Transverse colon (tissue), 4 donors: ENCODE measurements at regions of chr16 and their contacts with region 1.

Region 1: GRCh38 chr16:52128361-52128760 is 418.6 kb downstream of the TOX3 start:
- DNase-seq: no peak
- H3K4me3 ChIP-seq: no peak overlapping the region
- H3K27ac ChIP-seq: no peak overlapping the region
- H3K4me1 ChIP-seq: no peaks in the 10 kb centered on the region
- H3K27me3 ChIP-seq: no peaks in the 10 kb centered on the region
- CTCF ChIP-seq: no peak
- EP300 ChIP-seq: no peak
- POLR2A ChIP-seq: no peak

Region 2: GRCh38 chr16:51807551-51807950 is 320.8 kb before region 1 on chr16:
- in situ Hi-C with region 1: no loop called
- intact Hi-C with region 1: no loop called
- DNase-seq: no peak
- H3K4me3 ChIP-seq: no peak overlapping the region
- H3K27ac ChIP-seq: no peak overlapping the region
- H3K4me1 ChIP-seq: no peaks in the 10 kb centered on the region
- H3K27me3 ChIP-seq: no peaks in the 10 kb centered on the region
- CTCF ChIP-seq: no peak
- EP300 ChIP-seq: no peak
- POLR2A ChIP-seq: no peak

Region 3: GRCh38 chr16:52035436-52035835 is 92.9 kb before region 1 on chr16:
- in situ Hi-C with region 1: loop called in 1 of 4 experiments (anchors 25 kb)
- intact Hi-C with region 1: no loop called
- DNase-seq: no peak
- H3K4me3 ChIP-seq: no peak overlapping the region
- H3K27ac ChIP-seq: no peak overlapping the region
- H3K4me1 ChIP-seq: no peaks in the 10 kb centered on the region
- H3K27me3 ChIP-seq: no peaks in the 10 kb centered on the region
- CTCF ChIP-seq: no peak
- EP300 ChIP-seq: no peak
- POLR2A ChIP-seq: no peak

Region 4: GRCh38 chr16:52709306-52709705 is 580.9 kb after region 1 on chr16:
- in situ Hi-C with region 1: no loop called
- intact Hi-C with region 1: loop called (anchors 5 kb)
- DNase-seq: no peak
- H3K4me3 ChIP-seq: no peak overlapping the region
- H3K27ac ChIP-seq: no peak overlapping the region
- H3K4me1 ChIP-seq: no peaks in the 10 kb centered on the region
- H3K27me3 ChIP-seq: no peaks in the 10 kb centered on the region
- CTCF ChIP-seq: no peak
- EP300 ChIP-seq: no peak
- POLR2A ChIP-seq: no peak